ENCODE measurements at regions of chr12 and their contacts with region 1.

Region 1: GRCh38 chr12:30428098-30428497 is 267.6 kb downstream of the IPO8 start:
- DNase-seq: no peak
- ATAC-seq: no peak
- H3K4me3 ChIP-seq: no peak overlapping the region
- H3K27ac ChIP-seq: no peak overlapping the region
- H3K4me1 ChIP-seq: no peaks in the 10 kb centered on the region
- H3K27me3 ChIP-seq: no peaks in the 10 kb centered on the region
- CTCF ChIP-seq: no peak
- POLR2A ChIP-seq: no peak
- RAD21 ChIP-seq: no peak

Region 2: DNA sequence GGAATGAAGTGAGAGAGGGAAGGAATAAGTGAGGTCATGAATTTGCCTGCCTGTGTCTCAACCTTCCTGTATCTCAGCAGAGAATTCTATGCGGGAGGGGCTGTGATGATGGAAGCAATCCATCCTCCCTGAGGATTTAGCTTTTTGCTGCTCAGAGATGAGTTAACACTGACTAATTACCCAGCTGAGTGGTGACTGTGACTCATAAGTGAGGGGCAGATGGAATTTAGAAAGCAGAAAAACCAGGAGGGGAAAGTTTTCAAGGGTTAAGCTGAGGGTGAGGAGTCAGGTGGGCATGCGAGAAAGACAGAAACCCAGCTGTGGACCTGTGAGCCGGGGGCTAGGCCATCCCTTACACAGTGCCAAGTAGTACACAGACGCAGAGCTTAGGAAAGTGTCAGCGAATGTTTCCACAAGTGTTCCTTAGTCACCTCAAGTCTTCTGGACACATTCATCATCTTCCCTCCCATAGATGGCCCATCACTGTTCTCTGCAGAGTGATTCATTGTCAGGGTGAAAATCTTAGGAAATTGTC is 10.3 kb before region 1 on chr12:
- CTCF ChIA-PET with region 1: interaction called, 3 read pairs
- POLR2A ChIA-PET with region 1: interaction called, 10 read pairs
- dilution Hi-C with region 1: no loop called
- in situ Hi-C with region 1: no loop called
- intact Hi-C with region 1: no loop called
- DNase-seq: peak; percentile 74
- ATAC-seq: peak; percentile 87
- H3K4me3 ChIP-seq: no peak overlapping the region
- H3K27ac ChIP-seq: peak overlapping the region; percentile 41
- H3K4me1 ChIP-seq: no peaks in the 10 kb centered on the region
- H3K27me3 ChIP-seq: no peaks in the 10 kb centered on the region
- CTCF ChIP-seq: no peak
- POLR2A ChIP-seq: no peak
- RAD21 ChIP-seq: no peak

Region 3: GRCh38 chr12:30599608-30600007 is 171.5 kb after region 1 on chr12:
- CTCF ChIA-PET with region 1: no interaction called
- POLR2A ChIA-PET with region 1: no interaction called
- dilution Hi-C with region 1: no loop called
- in situ Hi-C with region 1: no loop called
- intact Hi-C with region 1: no loop called
- DNase-seq: peak; percentile 39
- ATAC-seq: peak; percentile 71
- H3K4me3 ChIP-seq: no peak overlapping the region
- H3K27ac ChIP-seq: no peak overlapping the region
- H3K4me1 ChIP-seq: peaks cover 2% of the 10 kb centered on the region; the same call in 1 of the 2 replicates
- H3K27me3 ChIP-seq: no peaks in the 10 kb centered on the region; the same call in 1 of the 2 replicates
- CTCF ChIP-seq: no peak
- POLR2A ChIP-seq: no peak
- RAD21 ChIP-seq: no peak

Region 4: GRCh38 chr12:30769802-30770201 is 341.7 kb after region 1 on chr12:
- CTCF ChIA-PET with region 1: no interaction called
- POLR2A ChIA-PET with region 1: no interaction called
- dilution Hi-C with region 1: no loop called
- in situ Hi-C with region 1: no loop called
- intact Hi-C with region 1: no loop called
- DNase-seq: no peak
- ATAC-seq: no peak
- H3K4me3 ChIP-seq: no peak overlapping the region
- H3K27ac ChIP-seq: no peak overlapping the region
- H3K4me1 ChIP-seq: no peaks in the 10 kb centered on the region
- H3K27me3 ChIP-seq: peaks cover 1% of the 10 kb centered on the region; the same call in 1 of the 2 replicates
- CTCF ChIP-seq: no peak
- POLR2A ChIP-seq: no peak
- RAD21 ChIP-seq: no peak

Measured in IMR-90 (cell line).